IMR-90 (cell line): ENCODE measurements at regions of chr19 and their contacts with region 1.

Region 1: GRCh38 chr19:18588611-18589379 is at the start of gene REX1BD:
- DNase-seq: peak; percentile 68
- ATAC-seq: peak; percentile 92
- H3K4me3 ChIP-seq: peak within 1 kb of the TSS; percentile 56
- H3K27ac ChIP-seq: peak within 1 kb of the TSS; percentile 52
- H3K4me1 ChIP-seq: peaks cover 5% of the 10 kb centered on the region
- H3K27me3 ChIP-seq: peaks cover 2% of the 10 kb centered on the region; the same call in 1 of the 2 replicates
- CTCF ChIP-seq: peak; percentile 75
- POLR2A ChIP-seq: peak; percentile 12; the same call in 1 of the 2 replicates
- RAD21 ChIP-seq: peak; percentile 45
- total RNA-seq, gene REX1BD: 14.2 and 19.2 TPM in 2 replicates

Region 2: GRCh38 chr19:18776288-18776594 is 187.4 kb after region 1 on chr19:
- CTCF ChIA-PET with region 1: interaction called, 7 read pairs
- POLR2A ChIA-PET with region 1: no interaction called
- dilution Hi-C with region 1: no loop called
- in situ Hi-C with region 1: no loop called
- intact Hi-C with region 1: loop called (anchors 1 kb)
- DNase-seq: peak; percentile 72
- ATAC-seq: peak; percentile 84
- H3K4me3 ChIP-seq: no peak overlapping the region
- H3K27ac ChIP-seq: peak overlapping the region; percentile 2; the same call in 1 of the 2 replicates
- H3K4me1 ChIP-seq: peaks cover 14% of the 10 kb centered on the region
- H3K27me3 ChIP-seq: no peaks in the 10 kb centered on the region
- CTCF ChIP-seq: peak; percentile 65
- POLR2A ChIP-seq: no peak; the same call in 1 of the 2 replicates
- RAD21 ChIP-seq: peak; percentile 56

Region 3: GRCh38 chr19:18831524-18832305 is 242.9 kb after region 1 on chr19 and contains the start of gene UPF1:
- CTCF ChIA-PET with region 1: no interaction called
- POLR2A ChIA-PET with region 1: no interaction called
- dilution Hi-C with region 1: no loop called
- in situ Hi-C with region 1: no loop called
- intact Hi-C with region 1: loop called (anchors 5 kb)
- DNase-seq: peak; percentile 88
- ATAC-seq: peak; percentile 87
- H3K4me3 ChIP-seq: peak within 1 kb of the TSS; percentile 80
- H3K27ac ChIP-seq: peak within 1 kb of the TSS; percentile 81
- H3K4me1 ChIP-seq: peaks cover 10% of the 10 kb centered on the region
- H3K27me3 ChIP-seq: no peaks in the 10 kb centered on the region
- CTCF ChIP-seq: 0 out of 2 replicates have a peak, but pooled peaks have one; percentile 9
- POLR2A ChIP-seq: peak; percentile 83
- RAD21 ChIP-seq: no peak
- total RNA-seq, gene UPF1: 31.2 and 31.4 TPM in 2 replicates

Region 4: DNA sequence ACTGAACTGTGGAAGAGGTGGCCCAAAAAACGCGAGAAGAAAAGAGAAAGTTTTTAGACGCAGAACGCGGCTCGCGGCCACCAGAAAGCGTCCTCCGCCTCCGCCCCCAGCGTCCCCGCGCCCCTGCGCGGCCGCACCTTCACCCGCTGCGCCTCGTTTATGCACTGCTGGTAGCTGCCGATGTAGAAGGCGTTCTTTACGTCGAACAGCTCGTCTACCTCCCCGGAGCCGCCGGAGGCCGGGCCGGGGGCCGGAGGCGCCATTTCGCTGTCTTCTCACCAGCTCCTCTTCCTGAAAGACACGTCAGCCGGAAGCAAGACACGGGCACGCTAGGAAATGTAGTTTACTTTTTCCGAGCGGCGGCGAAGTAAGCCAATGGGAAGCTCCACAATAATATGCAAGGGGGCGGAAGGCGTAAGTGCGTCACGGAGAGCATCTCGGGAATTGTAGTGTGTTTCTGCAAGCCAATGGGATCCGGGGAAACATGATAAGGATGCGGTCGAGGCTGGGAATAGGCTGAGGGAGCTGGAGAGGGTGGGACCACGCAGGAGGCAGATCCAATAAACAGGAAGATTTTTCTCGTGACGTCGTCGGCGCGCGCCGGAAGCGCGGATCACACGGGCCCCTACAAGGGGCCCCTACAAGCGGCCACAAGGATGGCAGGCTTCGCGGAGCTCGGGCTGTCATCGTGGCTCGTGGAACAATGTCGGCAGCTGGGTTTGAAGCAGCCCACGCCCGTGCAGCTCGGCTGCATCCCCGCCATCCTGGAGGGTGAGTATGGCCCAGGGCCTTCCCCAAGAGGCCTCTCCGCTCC is 330.5 kb after region 1 on chr19 and contains the starts of genes COPE and DDX49:
- CTCF ChIA-PET with region 1: no interaction called
- POLR2A ChIA-PET with region 1: no interaction called
- dilution Hi-C with region 1: no loop called
- in situ Hi-C with region 1: no loop called
- intact Hi-C with region 1: loop called (anchors 5 kb)
- DNase-seq: peak; percentile 100
- ATAC-seq: peak; percentile 98
- H3K4me3 ChIP-seq: peak within 1 kb of the TSS; percentile 72
- H3K27ac ChIP-seq: peak within 1 kb of the TSS; percentile 83
- H3K4me1 ChIP-seq: peaks cover 5% of the 10 kb centered on the region
- H3K27me3 ChIP-seq: no peaks in the 10 kb centered on the region
- CTCF ChIP-seq: no peak
- POLR2A ChIP-seq: peak; percentile 96
- RAD21 ChIP-seq: no peak
- total RNA-seq, gene COPE: 310 and 347 TPM in 2 replicates
- total RNA-seq, gene DDX49: 50.9 and 55.8 TPM in 2 replicates